ENCODE measurements at regions of chr16 and their contacts with region 1.

Region 1: DNA sequence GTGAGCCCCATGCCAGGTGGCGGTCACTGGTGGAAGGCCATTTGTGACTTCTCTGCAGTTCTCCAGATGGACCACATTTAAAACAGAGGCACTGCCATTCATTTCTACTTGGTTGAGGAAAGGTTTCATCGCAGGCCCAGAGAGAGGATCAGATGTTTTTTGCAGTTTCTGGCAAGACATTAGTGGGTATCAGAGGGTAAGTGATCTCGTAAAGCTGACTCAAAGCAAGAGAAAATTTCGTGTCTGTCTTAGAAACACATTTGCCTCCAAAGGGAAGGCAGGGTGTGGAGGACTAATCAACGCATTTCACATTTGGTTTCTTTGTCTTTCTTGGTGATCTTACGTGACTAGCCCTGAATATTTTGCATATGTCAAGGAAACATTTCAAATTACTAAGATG is 81.8 kb downstream of the PRKCB start:
- DNase-seq: no peak
- ATAC-seq: peak; percentile 43
- H3K4me3 Mint-ChIP-seq: no peak overlapping the region
- H3K27ac Mint-ChIP-seq: peak overlapping the region; percentile 84
- H3K4me1 Mint-ChIP-seq: peaks cover 83% of the 10 kb centered on the region
- H3K27me3 Mint-ChIP-seq: no peaks in the 10 kb centered on the region
- CTCF ChIP-seq: no peak

Region 2: GRCh38 chr16:23843143-23843542 is 74.5 kb before region 1 on chr16:
- CTCF ChIA-PET with region 1: no interaction called
- POLR2A ChIA-PET with region 1: no interaction called
- intact Hi-C with region 1: no loop called
- DNase-seq: no peak
- ATAC-seq: peak; percentile 66
- H3K4me3 Mint-ChIP-seq: peak overlapping the region; percentile 72
- H3K27ac Mint-ChIP-seq: peak overlapping the region; percentile 85
- H3K4me1 Mint-ChIP-seq: peaks cover 88% of the 10 kb centered on the region
- H3K27me3 Mint-ChIP-seq: no peaks in the 10 kb centered on the region
- CTCF ChIP-seq: no peak

Region 3: GRCh38 chr16:23896832-23897821 is 20.5 kb before region 1 on chr16:
- CTCF ChIA-PET with region 1: no interaction called
- POLR2A ChIA-PET with region 1: interaction called, 3 read pairs
- intact Hi-C with region 1: loop called (anchors 2 kb)
- DNase-seq: no peak
- ATAC-seq: peak; percentile 56
- H3K4me3 Mint-ChIP-seq: peak overlapping the region; percentile 50
- H3K27ac Mint-ChIP-seq: peak overlapping the region; percentile 87
- H3K4me1 Mint-ChIP-seq: peaks cover 90% of the 10 kb centered on the region
- H3K27me3 Mint-ChIP-seq: no peaks in the 10 kb centered on the region
- CTCF ChIP-seq: no peak

Region 4: DNA sequence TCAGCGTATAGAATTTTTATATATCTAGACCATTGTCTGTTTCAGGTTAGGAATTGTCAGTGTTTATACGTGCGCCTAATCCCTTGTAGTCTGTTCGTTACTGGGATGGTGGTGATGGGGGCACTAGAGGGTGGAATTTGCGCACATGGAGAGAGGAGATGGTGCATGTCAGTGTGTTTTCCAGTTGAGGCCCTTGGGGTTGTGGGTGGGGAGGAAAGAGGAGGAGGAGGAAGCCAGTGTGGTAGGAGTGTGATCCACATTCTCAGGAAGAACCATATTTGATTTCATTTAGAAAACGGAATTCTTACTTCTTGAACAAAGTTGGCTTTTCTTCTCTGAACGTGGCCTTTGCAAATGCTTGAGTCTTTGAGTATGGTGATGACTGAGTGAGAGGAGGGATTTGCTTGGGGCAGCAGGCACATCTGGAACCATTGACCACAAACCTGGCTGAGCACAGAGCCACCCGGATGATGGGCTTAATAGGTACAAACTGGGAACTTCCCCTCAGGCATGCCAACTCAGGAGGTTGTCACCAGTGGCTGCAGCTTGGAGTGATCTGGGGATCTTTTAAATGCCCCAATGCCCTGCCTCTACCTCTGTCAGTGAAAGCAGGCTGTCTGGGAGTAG is 17.1 kb after region 1 on chr16:
- CTCF ChIA-PET with region 1: interaction called, 3 read pairs
- POLR2A ChIA-PET with region 1: interaction called, 9 read pairs
- intact Hi-C with region 1: loop called (anchors 2 kb)
- DNase-seq: no peak
- ATAC-seq: no peak
- H3K4me3 Mint-ChIP-seq: no peak overlapping the region
- H3K27ac Mint-ChIP-seq: peak overlapping the region; percentile 74
- H3K4me1 Mint-ChIP-seq: peaks cover 92% of the 10 kb centered on the region
- H3K27me3 Mint-ChIP-seq: no peaks in the 10 kb centered on the region
- CTCF ChIP-seq: no peak

Region 5: DNA sequence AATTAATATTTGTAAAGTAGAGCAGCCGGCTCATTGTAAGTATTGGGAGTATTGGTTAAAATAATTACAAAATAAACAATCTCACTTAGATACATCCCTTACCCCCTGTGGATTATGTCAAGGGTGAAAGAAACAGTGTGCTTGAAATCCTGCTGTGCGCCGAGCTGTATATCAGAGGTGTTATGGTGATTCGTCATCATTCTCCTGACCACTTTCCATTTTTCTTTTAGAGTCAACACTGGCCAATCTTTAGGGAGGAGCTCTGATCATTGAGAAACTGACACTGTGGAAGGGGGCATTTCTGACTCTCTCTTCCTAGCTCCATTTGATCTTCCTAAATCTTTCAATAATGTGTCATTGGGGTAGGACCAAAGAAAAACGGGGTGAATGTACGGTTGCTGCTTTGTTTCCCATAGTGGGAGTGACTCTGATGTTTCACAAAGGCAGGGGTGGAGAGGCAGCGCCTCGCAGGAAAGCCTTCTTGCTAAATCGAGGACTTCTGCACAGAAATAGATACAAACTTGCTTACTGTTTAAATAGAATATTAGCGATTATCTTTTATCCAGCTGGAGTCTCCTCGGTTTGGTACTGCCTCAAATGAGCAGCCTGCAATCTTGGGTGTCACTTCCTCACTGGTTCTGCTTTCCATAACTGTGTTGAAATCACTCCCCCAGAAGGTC is 41.6 kb after region 1 on chr16:
- CTCF ChIA-PET with region 1: no interaction called
- POLR2A ChIA-PET with region 1: no interaction called
- intact Hi-C with region 1: no loop called
- DNase-seq: no peak
- ATAC-seq: peak; percentile 76
- H3K4me3 Mint-ChIP-seq: peak overlapping the region; percentile 55
- H3K27ac Mint-ChIP-seq: peak overlapping the region; percentile 87
- H3K4me1 Mint-ChIP-seq: peaks cover 93% of the 10 kb centered on the region
- H3K27me3 Mint-ChIP-seq: no peaks in the 10 kb centered on the region
- CTCF ChIP-seq: no peak

Region 6: DNA sequence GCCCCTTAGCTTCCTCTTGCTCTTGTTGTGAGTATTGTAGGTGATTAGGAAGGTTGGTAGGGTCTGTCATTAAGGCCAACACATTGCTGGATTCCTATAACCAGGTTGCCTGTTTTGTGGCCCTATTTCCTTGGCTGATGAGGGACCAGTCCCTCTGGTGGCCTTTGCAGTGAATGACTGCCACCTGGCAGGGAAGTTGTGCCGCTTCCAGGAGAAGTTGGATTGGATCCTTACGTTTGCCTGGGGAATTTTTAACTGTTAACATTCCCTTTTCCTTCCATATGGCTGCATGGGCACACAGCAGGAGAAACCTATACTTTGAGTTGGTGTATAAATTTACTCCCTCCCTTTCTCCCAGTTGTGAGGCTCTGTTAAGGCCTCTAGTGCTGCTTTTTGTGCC is 1226.3 kb after region 1 on chr16:
- CTCF ChIA-PET with region 1: no interaction called
- POLR2A ChIA-PET with region 1: no interaction called
- intact Hi-C with region 1: no loop called
- DNase-seq: no peak
- ATAC-seq: no peak
- H3K4me3 Mint-ChIP-seq: no peak overlapping the region
- H3K27ac Mint-ChIP-seq: no peak overlapping the region
- H3K4me1 Mint-ChIP-seq: no peaks in the 10 kb centered on the region
- H3K27me3 Mint-ChIP-seq: no peaks in the 10 kb centered on the region
- CTCF ChIP-seq: no peak

Measured in activated B cell treated with CpG ODN at 0.5 μM for 24 hours (primary cell).